ENCODE measurements at regions of chrX and their contacts with region 1.

Region 1: GRCh38 chrX:153470435-153471363 is at the start of gene HAUS7:
- DNase-seq: peak; percentile 88 to 93 (median 90)
- ATAC-seq: peak; percentile 87 to 92 (median 89)
- H3K4me3 ChIP-seq: peak within 1 kb of the TSS; percentile 44 to 82 (median 65)
- H3K27ac ChIP-seq: peak within 1 kb of the TSS in 11 of 12 donors; percentile 34 to 80 (median 71)
- H3K4me1 ChIP-seq: peaks cover 0 to 30% (median 9%) of the 10 kb centered on the region in 12 donors
- H3K27me3 ChIP-seq: no peaks in the 10 kb centered on the region
- CTCF ChIP-seq: peak; percentile 54 to 86 (median 68)
- POLR2A ChIP-seq: peak in 1 of 2 donors; percentile 36
- total RNA-seq, gene HAUS7: 15.3 to 28.2 (median 19.5) TPM

Region 2: DNA sequence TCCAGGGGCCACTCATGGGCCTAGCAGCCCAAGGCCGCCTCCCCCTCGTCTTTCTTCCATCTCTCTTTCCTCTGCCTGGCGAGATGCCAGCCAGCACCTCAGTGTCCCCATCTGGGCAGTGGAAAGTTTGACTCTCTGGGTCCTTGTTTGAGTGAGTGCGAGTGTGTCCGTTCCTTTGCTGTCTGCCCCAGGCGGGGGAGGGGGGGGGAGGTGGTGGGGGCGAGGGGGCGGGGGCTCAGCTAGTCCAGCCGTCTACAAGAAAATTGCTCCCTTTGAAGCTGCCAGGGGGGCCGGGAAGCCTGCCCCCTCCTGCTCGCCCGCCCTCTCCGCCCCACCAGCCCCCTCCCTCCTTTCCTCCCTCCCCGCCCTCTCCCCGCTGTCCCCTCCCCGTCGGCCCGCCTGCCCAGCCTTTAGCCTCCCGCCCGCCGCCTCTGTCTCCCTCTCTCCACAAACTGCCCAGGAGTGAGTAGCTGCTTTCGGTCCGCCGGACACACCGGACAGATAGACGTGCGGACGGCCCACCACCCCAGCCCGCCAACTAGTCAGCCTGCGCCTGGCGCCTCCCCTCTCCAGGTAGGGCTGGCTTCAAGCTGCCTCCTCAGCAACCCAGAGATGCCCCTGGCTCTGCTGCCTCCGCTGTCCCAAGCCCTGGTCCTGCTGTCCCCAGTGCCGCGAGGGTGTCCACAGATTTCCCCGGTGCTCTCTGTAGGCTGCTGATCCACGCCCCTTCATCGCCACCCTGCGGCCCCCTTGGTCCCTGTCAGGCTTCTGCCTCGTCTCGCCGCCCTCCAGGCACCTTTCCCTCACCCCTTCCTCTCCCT is 24.1 kb after region 1 on chrX and contains the start of gene BGN:
- intact Hi-C with region 1: loop called in 2 of 10 experiments (anchors 2 kb)
- DNase-seq: peak; percentile 61 to 78 (median 68)
- ATAC-seq: peak; percentile 26 to 64 (median 44)
- H3K4me3 ChIP-seq: peak within 1 kb of the TSS in 11 of 12 donors; percentile 38 to 66 (median 51)
- H3K27ac ChIP-seq: peak within 1 kb of the TSS in 11 of 12 donors; percentile 53 to 87 (median 71)
- H3K4me1 ChIP-seq: peaks cover 0 to 21% (median 0%) of the 10 kb centered on the region in 12 donors
- H3K27me3 ChIP-seq: peaks cover 0 to 14% (median 0%) of the 10 kb centered on the region in 9 donors
- CTCF ChIP-seq: peak in 10 of 12 donors; percentile 10 to 47 (median 28)
- POLR2A ChIP-seq: no peak
- total RNA-seq, gene BGN: 55.7 to 264 (median 76.9) TPM

Region 3: DNA sequence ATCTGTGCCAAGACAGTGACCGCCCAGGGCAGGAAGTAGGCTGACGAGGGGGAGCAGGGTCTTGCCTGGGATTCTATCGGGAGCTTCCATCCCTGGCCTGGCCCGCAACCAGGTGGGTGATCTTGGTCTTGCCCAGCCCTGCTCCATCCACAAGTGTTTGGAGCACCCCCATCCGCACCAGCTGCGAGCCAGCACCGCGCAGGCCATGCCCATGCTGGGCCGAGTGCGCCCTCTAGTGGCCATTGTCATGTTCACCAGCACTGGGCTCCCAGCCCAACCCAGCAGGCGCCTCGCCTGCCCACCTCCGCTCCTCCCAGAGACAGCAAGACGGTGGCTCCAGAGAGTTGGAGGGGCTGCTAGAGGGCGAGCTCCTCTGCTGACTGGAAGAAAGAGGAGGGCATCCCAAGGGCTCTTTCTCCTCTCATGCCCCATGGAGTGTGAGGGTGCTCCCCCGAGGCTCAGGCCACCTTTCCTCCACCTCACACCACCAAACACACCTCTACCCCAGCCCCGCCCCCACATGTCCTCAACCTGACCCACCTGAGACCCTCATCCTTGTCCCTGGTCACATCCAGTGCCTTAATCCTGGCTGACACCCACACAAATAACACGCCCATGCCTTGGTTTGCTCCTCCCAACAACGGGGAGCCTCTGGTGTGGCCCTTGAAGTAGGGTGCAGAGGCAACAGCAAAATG is 36.9 kb after region 1 on chrX:
- intact Hi-C with region 1: loop called in 6 of 10 experiments (anchors 2 to 5 kb)
- DNase-seq: peak; percentile 75 to 88 (median 79)
- ATAC-seq: peak; percentile 61 to 93 (median 84)
- H3K4me3 ChIP-seq: no peak overlapping the region
- H3K27ac ChIP-seq: peak overlapping the region in 2 of 12 donors; percentile 22 to 24
- H3K4me1 ChIP-seq: peaks cover 0 to 7% (median 0%) of the 10 kb centered on the region in 12 donors
- H3K27me3 ChIP-seq: peaks cover 0 to 4% (median 0%) of the 10 kb centered on the region in 9 donors
- CTCF ChIP-seq: peak; percentile 72 to 93 (median 79)
- POLR2A ChIP-seq: no peak

Region 4: GRCh38 chrX:153763989-153764755 is 293.5 kb after region 1 on chrX and contains the start of gene PLXNB3:
- intact Hi-C with region 1: no loop called
- DNase-seq: peak; percentile 66 to 88 (median 75)
- ATAC-seq: peak; percentile 52 to 89 (median 81)
- H3K4me3 ChIP-seq: peak within 1 kb of the TSS in 3 of 12 donors; percentile 3 to 21 (median 19)
- H3K27ac ChIP-seq: peak within 1 kb of the TSS in 7 of 12 donors; percentile 9 to 81 (median 28)
- H3K4me1 ChIP-seq: peaks cover 0 to 26% (median 5%) of the 10 kb centered on the region in 12 donors
- H3K27me3 ChIP-seq: peaks cover 0 to 4% (median 0%) of the 10 kb centered on the region in 9 donors
- CTCF ChIP-seq: peak; percentile 68 to 93 (median 78)
- POLR2A ChIP-seq: no peak
- total RNA-seq, gene PLXNB3: 1.6 to 8.6 (median 3.5) TPM